Activated naive CD8-positive, alpha-beta T cell treated with anti-CD3 and anti-CD28 coated beads, Interleukin-2, amount 10 ng/mL, durations not matched to agents 7 days and 5 days (primary cell): ENCODE measurements at regions of chr1 and their contacts with region 1.

Region 1: DNA sequence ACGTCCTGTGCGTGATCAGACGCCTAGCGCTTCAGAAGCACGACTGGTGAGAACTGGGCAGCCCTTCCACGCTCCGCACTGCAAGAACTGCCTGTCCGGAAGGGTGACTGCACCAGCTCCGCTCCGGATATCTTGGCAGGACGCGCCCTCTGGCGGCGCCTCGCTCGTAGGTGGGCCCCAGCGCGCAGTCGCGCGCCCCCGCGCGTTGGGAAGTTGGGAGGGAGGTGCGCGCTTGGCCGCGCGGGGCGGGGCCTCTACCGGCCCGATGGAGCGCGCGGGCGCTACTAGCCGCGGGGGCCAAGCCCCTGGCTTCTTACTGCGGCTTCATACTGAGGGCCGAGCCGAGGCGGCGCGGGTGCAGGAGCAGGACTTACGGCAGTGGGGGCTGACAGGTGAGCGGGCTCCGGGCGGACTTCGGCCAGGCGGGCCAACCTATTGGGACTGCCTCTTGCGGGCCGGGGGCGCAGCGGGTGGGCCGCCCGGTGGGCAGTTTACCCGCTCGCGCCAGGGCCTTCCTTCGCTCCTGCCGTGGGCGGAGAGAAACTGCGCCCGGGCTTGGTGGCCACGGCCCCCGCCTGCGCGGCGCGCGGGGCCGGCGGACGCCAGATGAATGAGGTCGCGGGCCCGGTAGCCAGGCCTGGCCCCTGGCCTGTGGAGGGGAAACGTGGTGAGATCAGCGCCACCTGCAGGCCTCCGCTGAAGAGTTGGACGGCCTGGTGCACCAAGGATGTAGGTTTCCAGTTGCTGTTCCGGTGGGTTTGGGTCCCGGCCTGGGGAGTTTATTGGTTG is at the start of gene CHD1L:
- DNase-seq: peak; percentile 97
- ATAC-seq: peak; percentile 90
- H3K4me3 Mint-ChIP-seq: peak within 1 kb of the TSS; percentile 94
- H3K27ac Mint-ChIP-seq: peak within 1 kb of the TSS; percentile 81
- H3K4me1 Mint-ChIP-seq: peaks cover 39% of the 10 kb centered on the region
- H3K27me3 Mint-ChIP-seq: no peaks in the 10 kb centered on the region
- total RNA-seq, gene CHD1L: 49.6 to 58.3 TPM

Region 2: GRCh38 chr1:147084273-147085096 is 158.1 kb before region 1 on chr1:
- POLR2A ChIA-PET with region 1: interaction called, 19 read pairs
- DNase-seq: peak; percentile 78
- ATAC-seq: peak; percentile 76
- H3K4me3 Mint-ChIP-seq: peak overlapping the region; percentile 95
- H3K27ac Mint-ChIP-seq: peak overlapping the region; percentile 100
- H3K4me1 Mint-ChIP-seq: peaks cover 30% of the 10 kb centered on the region
- H3K27me3 Mint-ChIP-seq: peaks cover 68% of the 10 kb centered on the region

Region 3: GRCh38 chr1:147172168-147172992 is 70.3 kb before region 1 on chr1 and contains the start of gene PRKAB2:
- POLR2A ChIA-PET with region 1: interaction called, 10 read pairs
- DNase-seq: peak; percentile 95
- ATAC-seq: peak; percentile 87
- H3K4me3 Mint-ChIP-seq: peak within 1 kb of the TSS; percentile 99
- H3K27ac Mint-ChIP-seq: peak within 1 kb of the TSS; percentile 97
- H3K4me1 Mint-ChIP-seq: peaks cover 26% of the 10 kb centered on the region
- H3K27me3 Mint-ChIP-seq: no peaks in the 10 kb centered on the region
- total RNA-seq, gene PRKAB2: 12.6 to 14.0 TPM

Region 4: DNA sequence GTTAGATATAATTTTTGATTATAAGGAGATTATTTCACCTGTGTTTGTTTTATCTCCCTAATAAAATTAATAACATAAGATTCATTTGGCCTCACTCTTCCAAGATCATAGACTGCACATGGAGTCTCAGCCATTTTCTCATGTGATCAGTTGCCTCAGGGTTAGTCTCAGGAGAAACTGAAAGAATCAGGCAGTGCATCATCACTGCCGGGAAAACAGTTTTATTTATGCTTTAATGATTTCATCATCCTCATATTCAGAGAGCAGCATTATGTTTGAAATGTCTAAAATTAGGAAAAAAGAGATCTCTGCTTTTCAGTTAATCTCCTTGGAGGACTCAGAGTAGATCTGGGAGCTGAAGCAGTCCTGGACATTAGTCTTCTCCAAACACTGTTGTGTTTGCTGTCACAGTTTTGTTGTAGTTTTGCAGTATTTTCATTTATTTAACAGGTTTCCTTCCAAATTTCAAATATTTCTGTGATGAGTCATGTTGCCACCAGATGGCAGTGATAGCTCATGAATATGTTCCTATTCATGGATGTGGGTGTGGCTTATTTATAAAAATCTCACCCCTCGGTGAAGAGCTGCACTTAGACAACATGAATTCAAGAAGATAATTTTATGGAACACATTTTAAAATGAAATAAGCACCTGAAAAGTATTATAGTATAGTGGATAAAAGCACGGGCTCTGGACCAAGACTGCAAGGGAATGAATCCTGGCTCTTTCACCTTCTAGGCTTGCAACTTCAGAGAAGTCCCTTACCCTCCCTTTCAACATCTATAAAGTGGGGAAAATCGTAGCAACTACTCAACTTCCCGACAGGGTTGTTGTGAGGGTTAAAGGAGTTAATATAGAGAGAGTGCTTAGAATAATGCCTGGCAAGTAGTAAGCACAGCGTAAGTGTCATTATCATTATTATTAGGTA is 31.0 kb after region 1 on chr1:
- POLR2A ChIA-PET with region 1: no interaction called
- DNase-seq: no peak
- ATAC-seq: no peak
- H3K4me3 Mint-ChIP-seq: no peak overlapping the region
- H3K27ac Mint-ChIP-seq: no peak overlapping the region
- H3K4me1 Mint-ChIP-seq: peaks cover 2% of the 10 kb centered on the region
- H3K27me3 Mint-ChIP-seq: no peaks in the 10 kb centered on the region